CD4-positive, alpha-beta memory T cell (primary cell): ENCODE measurements at regions of chr15 and their contacts with region 1.

Region 1: GRCh38 chr15:90529371-90530249 is at the start of gene CRTC3:
- DNase-seq: peak; percentile 61 to 73 (median 65)
- H3K4me3 ChIP-seq: peak within 1 kb of the TSS; percentile 77 to 84
- H3K4me3 Mint-ChIP-seq: peak within 1 kb of the TSS; percentile 92 to 98 (median 94)
- H3K27ac ChIP-seq: peak within 1 kb of the TSS; percentile 64
- H3K27ac Mint-ChIP-seq: peak within 1 kb of the TSS; percentile 90 to 95 (median 94)
- H3K4me1 ChIP-seq: peaks cover 40% of the 10 kb centered on the region
- H3K4me1 Mint-ChIP-seq: peaks cover 29 to 49% (median 42%) of the 10 kb centered on the region in 4 donors
- H3K27me3 ChIP-seq: no peaks in the 10 kb centered on the region
- H3K27me3 Mint-ChIP-seq: no peaks in the 10 kb centered on the region
- total RNA-seq, gene CRTC3: 72.2 to 75.5 TPM

Region 2: DNA sequence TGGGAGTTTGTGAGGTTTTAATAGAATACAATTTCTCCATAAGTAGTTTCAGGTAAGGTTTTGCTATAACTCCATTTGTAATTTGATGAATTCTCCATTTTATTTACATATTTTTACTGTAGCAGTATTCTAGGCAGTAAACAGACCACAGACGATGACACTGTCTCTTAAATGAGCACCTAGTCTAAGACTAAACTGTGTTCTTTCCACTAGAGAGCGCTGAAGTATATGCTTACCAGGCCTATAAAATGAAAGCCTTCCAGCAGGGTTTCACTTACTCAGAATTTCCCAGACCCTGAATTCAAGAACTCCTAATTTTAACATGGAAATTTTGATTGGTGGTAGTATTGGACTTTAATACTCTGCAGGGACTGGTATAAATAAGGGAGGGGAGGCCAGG is 1236.6 kb before region 1 on chr15:
- CTCF ChIA-PET with region 1: no interaction called
- POLR2A ChIA-PET with region 1: no interaction called
- intact Hi-C with region 1: no loop called
- DNase-seq: no peak
- H3K4me3 ChIP-seq: no peak overlapping the region
- H3K4me3 Mint-ChIP-seq: no peak overlapping the region
- H3K27ac ChIP-seq: no peak overlapping the region
- H3K27ac Mint-ChIP-seq: no peak overlapping the region
- H3K4me1 ChIP-seq: no peaks in the 10 kb centered on the region
- H3K4me1 Mint-ChIP-seq: no peaks in the 10 kb centered on the region
- H3K27me3 ChIP-seq: no peaks in the 10 kb centered on the region
- H3K27me3 Mint-ChIP-seq: no peaks in the 10 kb centered on the region

Region 3: GRCh38 chr15:90539789-90540188 is 10.2 kb after region 1 on chr15:
- CTCF ChIA-PET with region 1: interaction called, 24 read pairs
- POLR2A ChIA-PET with region 1: interaction called, 79 read pairs
- intact Hi-C with region 1: loop called (anchors 1 kb)
- DNase-seq: peak; percentile 44 to 67 (median 57)
- H3K4me3 ChIP-seq: peak overlapping the region; percentile 33 to 43
- H3K4me3 Mint-ChIP-seq: peak overlapping the region; percentile 88 to 96 (median 92)
- H3K27ac ChIP-seq: peak overlapping the region; percentile 74
- H3K27ac Mint-ChIP-seq: peak overlapping the region; percentile 92 to 99 (median 97)
- H3K4me1 ChIP-seq: peaks cover 86% of the 10 kb centered on the region
- H3K4me1 Mint-ChIP-seq: peaks cover 57 to 84% (median 72%) of the 10 kb centered on the region in 4 donors
- H3K27me3 ChIP-seq: no peaks in the 10 kb centered on the region
- H3K27me3 Mint-ChIP-seq: no peaks in the 10 kb centered on the region

Region 4: DNA sequence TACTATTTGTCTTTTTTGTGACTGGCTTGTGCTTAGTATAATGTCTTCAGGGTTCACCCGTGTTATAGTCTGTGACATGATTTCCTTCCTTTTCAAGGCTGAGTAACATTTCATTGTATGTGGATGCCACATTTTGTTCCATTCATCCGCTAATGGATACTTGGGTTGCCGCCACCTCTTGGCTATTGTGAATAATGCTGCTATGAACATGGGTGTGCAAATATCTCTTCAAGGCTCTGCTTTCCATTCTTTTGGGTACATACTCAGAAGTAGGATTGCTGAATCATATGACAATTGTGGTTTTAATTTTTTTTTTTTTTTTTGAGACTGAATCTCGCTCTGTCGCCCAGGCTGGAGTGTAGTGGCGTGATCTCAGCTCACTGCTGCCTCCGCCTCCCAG is 15.5 kb after region 1 on chr15:
- CTCF ChIA-PET with region 1: interaction called, 24 read pairs
- POLR2A ChIA-PET with region 1: interaction called, 79 read pairs
- intact Hi-C with region 1: loop called (anchors 2 kb)
- DNase-seq: no peak
- H3K4me3 ChIP-seq: no peak overlapping the region
- H3K4me3 Mint-ChIP-seq: no peak overlapping the region
- H3K27ac ChIP-seq: no peak overlapping the region
- H3K27ac Mint-ChIP-seq: peak overlapping the region in 2 of 7 donors; percentile 6 to 80
- H3K4me1 ChIP-seq: peaks cover 54% of the 10 kb centered on the region
- H3K4me1 Mint-ChIP-seq: peaks cover 30 to 66% (median 53%) of the 10 kb centered on the region in 4 donors
- H3K27me3 ChIP-seq: no peaks in the 10 kb centered on the region
- H3K27me3 Mint-ChIP-seq: no peaks in the 10 kb centered on the region

Region 5: DNA sequence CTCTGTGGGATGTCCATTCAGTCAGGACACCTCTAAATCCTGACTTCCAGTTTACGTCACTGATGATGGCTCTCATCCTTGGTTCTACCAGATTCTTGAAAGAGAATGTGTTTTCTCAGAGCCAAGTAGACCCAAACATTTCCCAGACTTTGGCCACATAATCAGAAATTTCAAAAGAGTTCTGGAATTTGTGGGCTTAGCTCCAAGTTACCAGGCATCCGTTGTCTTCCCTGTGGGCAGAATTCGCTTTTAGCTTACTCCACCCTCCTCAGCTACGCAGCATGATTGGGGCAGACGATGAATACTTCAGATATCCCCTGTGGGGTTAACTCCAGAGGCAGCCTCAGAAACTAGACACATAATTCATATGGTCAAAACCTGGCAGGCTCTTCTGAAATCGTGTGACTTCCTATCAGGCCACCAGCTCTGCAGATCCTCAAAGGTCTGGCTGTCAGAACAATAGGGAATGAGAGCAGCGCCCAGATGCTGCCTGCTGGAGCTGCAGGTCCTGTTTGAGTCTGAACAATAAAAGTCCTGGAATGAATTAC is 30.7 kb after region 1 on chr15:
- CTCF ChIA-PET with region 1: interaction called, 11 read pairs
- POLR2A ChIA-PET with region 1: interaction called, 16 read pairs
- intact Hi-C with region 1: no loop called
- DNase-seq: no peak
- H3K4me3 ChIP-seq: no peak overlapping the region
- H3K4me3 Mint-ChIP-seq: peak overlapping the region in 2 of 8 donors; percentile 1 to 5
- H3K27ac ChIP-seq: no peak overlapping the region
- H3K27ac Mint-ChIP-seq: peak overlapping the region in 5 of 7 donors; percentile 5 to 89 (median 81)
- H3K4me1 ChIP-seq: peaks cover 76% of the 10 kb centered on the region
- H3K4me1 Mint-ChIP-seq: peaks cover 58 to 88% (median 69%) of the 10 kb centered on the region in 4 donors
- H3K27me3 ChIP-seq: no peaks in the 10 kb centered on the region
- H3K27me3 Mint-ChIP-seq: no peaks in the 10 kb centered on the region

Region 6: DNA sequence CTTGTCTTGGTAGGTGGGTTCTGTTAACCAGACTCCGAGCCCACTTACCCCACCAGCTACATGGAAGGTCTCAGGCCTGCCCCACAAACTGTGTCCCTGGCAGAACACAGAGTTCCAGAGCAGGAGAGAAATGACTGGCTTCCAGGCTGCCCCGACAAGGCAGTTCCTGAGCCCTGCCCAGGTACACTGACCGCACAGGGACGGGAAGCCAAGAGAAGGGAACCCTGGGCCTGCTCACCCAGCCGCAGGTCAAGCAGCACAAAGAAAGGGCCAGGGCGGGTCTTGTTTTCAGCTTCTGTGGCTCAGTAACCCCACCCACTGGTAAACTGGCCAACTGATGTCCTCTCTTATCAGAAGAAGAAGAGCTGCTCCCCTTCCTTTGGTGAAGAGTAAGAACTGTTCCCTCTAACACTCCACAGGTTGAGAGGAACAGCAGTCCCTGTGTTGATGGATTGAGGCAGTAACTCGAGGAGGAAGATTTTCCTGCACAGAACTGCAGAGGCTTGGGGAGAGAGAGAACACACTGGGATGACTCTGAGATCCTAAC is 68.5 kb after region 1 on chr15:
- CTCF ChIA-PET with region 1: interaction called, 3 read pairs
- POLR2A ChIA-PET with region 1: interaction called, 22 read pairs
- intact Hi-C with region 1: loop called (anchors 1 kb)
- DNase-seq: peak in 1 of 5 donors; percentile 43
- H3K4me3 ChIP-seq: peak overlapping the region in 1 of 2 donors; percentile 21
- H3K4me3 Mint-ChIP-seq: peak overlapping the region; percentile 18 to 86 (median 79)
- H3K27ac ChIP-seq: peak overlapping the region; percentile 62
- H3K27ac Mint-ChIP-seq: peak overlapping the region; percentile 91 to 97 (median 96)
- H3K4me1 ChIP-seq: peaks cover 77% of the 10 kb centered on the region
- H3K4me1 Mint-ChIP-seq: peaks cover 54 to 81% (median 70%) of the 10 kb centered on the region in 4 donors
- H3K27me3 ChIP-seq: no peaks in the 10 kb centered on the region
- H3K27me3 Mint-ChIP-seq: no peaks in the 10 kb centered on the region

Region 7: DNA sequence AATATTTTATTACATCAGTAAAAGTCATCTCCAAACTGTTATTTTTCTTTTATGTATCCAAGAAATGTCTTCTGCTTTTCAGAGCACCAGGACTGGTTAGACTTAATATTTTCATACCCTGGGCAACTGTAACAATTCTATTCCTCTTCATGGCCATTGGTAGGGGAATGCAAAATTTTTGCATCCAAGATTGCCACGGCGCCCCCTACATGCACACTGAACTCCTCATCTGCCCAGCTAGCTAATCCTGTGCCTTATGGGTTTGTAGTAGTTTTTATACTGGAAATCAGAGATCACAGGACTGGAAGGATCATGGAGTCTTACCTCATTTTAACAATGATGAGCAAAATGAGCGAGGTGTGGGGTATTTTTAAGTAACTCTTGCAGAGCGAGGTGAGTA is 74.3 kb after region 1 on chr15:
- CTCF ChIA-PET with region 1: interaction called, 4 read pairs
- POLR2A ChIA-PET with region 1: interaction called, 22 read pairs
- intact Hi-C with region 1: no loop called
- DNase-seq: peak in 4 of 5 donors; percentile 22 to 35 (median 30)
- H3K4me3 ChIP-seq: no peak overlapping the region
- H3K4me3 Mint-ChIP-seq: no peak overlapping the region
- H3K27ac ChIP-seq: no peak overlapping the region
- H3K27ac Mint-ChIP-seq: peak overlapping the region in 5 of 7 donors; percentile 12 to 75 (median 60)
- H3K4me1 ChIP-seq: peaks cover 19% of the 10 kb centered on the region
- H3K4me1 Mint-ChIP-seq: peaks cover 9 to 41% (median 31%) of the 10 kb centered on the region in 4 donors
- H3K27me3 ChIP-seq: no peaks in the 10 kb centered on the region
- H3K27me3 Mint-ChIP-seq: no peaks in the 10 kb centered on the region

Region 8: GRCh38 chr15:90686435-90687218 is 157.0 kb after region 1 on chr15:
- CTCF ChIA-PET with region 1: no interaction called
- POLR2A ChIA-PET with region 1: no interaction called
- intact Hi-C with region 1: no loop called
- DNase-seq: peak in 4 of 5 donors; percentile 32 to 58 (median 42)
- H3K4me3 ChIP-seq: no peak overlapping the region
- H3K4me3 Mint-ChIP-seq: peak overlapping the region in 4 of 8 donors; percentile 7 to 59 (median 14)
- H3K27ac ChIP-seq: no peak overlapping the region
- H3K27ac Mint-ChIP-seq: peak overlapping the region in 6 of 7 donors; percentile 5 to 67 (median 36)
- H3K4me1 ChIP-seq: peaks cover 16% of the 10 kb centered on the region
- H3K4me1 Mint-ChIP-seq: peaks cover 11 to 19% (median 11%) of the 10 kb centered on the region in 4 donors
- H3K27me3 ChIP-seq: no peaks in the 10 kb centered on the region
- H3K27me3 Mint-ChIP-seq: peaks cover 0 to 1% of the 10 kb centered on the region in 2 donors